SK-N-SH (cell line): ENCODE measurements at regions of chr2 and their contacts with region 1.

Region 1: DNA sequence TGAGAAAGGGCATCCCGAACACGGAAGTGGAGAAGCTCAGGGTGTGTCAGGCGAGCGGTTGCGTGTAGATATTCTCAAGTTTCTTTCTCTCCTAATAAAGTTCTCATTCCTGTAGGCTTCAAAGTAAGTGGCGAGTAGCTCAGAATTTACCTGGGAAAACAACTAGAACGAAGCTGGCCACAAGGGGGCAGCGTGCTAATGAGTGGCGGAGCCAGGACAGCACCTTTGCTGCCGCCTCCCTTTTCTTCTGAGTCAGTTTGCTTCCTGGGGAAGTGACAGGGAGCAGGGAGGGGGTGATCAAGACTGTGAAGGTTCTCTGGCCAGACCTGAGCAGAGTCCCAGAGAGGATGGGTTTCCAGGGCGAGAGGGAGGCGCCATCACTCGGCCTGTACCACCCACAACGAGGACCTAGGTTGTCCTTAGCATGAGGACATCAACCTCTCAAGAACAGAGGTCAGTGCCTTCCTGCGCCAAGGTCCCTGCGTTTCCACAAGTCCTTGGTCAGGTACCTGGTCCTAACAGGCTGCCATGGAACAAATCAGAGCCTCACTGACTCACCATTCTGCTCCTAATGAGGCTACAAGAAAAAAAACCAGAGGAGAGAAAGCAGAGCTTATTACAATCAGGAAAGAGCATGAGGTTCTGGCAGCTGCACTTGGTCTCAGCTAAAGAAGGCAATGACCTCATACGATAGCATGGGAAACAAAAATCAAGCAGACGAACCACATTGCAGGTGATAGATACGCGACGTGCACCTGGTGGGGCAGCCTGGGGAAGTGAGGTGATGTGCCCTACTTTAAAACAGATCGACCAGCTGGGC is 98.6 kb downstream of the PLB1 start:
- DNase-seq: peak; percentile 85
- H3K4me3 ChIP-seq: no peak overlapping the region; a peak in 1 of 4 replicates
- H3K27ac ChIP-seq: peak overlapping the region in 1 of 2 experiments; percentile 33; a peak in 2 of 4 replicates
- H3K4me1 ChIP-seq: peaks cover 4 to 8% of the 10 kb centered on the region in 2 experiments; a peak in 2 of 4 replicates
- H3K27me3 ChIP-seq: no peaks in the 10 kb centered on the region
- CTCF ChIP-seq: peak; percentile 97
- EP300 ChIP-seq: no peak
- RAD21 ChIP-seq: peak; percentile 91

Region 2: DNA sequence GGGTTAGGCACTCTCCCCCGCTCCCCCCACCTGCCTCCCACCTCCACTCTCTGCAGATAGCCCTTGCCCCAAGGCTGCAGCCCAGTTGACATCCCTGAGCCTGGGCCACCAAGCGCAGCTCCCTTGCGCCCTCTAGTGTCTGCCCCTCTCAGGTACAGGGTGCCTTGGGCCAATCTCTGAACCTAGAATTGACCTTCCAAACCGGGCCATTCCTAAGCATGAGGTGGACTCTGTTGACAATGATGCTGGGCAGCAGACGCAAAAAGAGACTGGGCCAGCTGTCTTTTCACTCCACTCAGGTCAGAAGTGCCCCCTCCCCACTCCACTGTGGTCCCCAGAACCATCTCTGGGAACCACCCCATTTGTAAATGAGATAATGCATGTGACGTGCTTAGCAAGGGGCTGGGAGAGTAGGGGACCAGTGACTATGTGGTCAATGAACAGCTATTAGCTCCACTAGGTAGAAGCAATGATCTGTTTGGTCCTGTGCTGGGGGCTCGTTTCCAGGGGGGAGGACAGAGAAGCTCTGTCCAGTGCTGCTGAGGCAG is 141.9 kb before region 1 on chr2:
- CTCF ChIA-PET with region 1: no interaction called
- POLR2A ChIA-PET with region 1: no interaction called
- DNase-seq: peak; percentile 83
- H3K4me3 ChIP-seq: no peak overlapping the region; a peak in 1 of 4 replicates
- H3K27ac ChIP-seq: no peak overlapping the region
- H3K4me1 ChIP-seq: peaks cover 3 to 24% of the 10 kb centered on the region in 2 experiments; a peak in 2 of 4 replicates
- H3K27me3 ChIP-seq: no peaks in the 10 kb centered on the region
- CTCF ChIP-seq: peak; percentile 96
- EP300 ChIP-seq: no peak
- RAD21 ChIP-seq: peak; percentile 87

Region 3: GRCh38 chr2:28583899-28584553 is 10.5 kb before region 1 on chr2:
- CTCF ChIA-PET with region 1: interaction called, 90 read pairs
- POLR2A ChIA-PET with region 1: interaction called, 3 read pairs
- DNase-seq: no peak
- H3K4me3 ChIP-seq: peak overlapping the region in 1 of 2 experiments; percentile 21; a peak in 2 of 4 replicates
- H3K27ac ChIP-seq: peak overlapping the region in 1 of 2 experiments; percentile 97; a peak in 2 of 4 replicates
- H3K4me1 ChIP-seq: peaks cover 0 to 19% of the 10 kb centered on the region in 2 experiments; a peak in 3 of 4 replicates
- H3K27me3 ChIP-seq: no peaks in the 10 kb centered on the region
- CTCF ChIP-seq: no peak
- EP300 ChIP-seq: peak in 1 of 2 experiments; percentile 91; a peak in 2 of 4 replicates
- RAD21 ChIP-seq: no peak

Region 4: GRCh38 chr2:28621172-28622100 is 26.9 kb after region 1 on chr2:
- CTCF ChIA-PET with region 1: interaction called, 36 read pairs
- POLR2A ChIA-PET with region 1: no interaction called
- DNase-seq: peak; percentile 47
- H3K4me3 ChIP-seq: no peak overlapping the region
- H3K27ac ChIP-seq: peak overlapping the region in 1 of 2 experiments; percentile 73; a peak in 2 of 4 replicates
- H3K4me1 ChIP-seq: peaks cover 0 to 2% of the 10 kb centered on the region in 2 experiments; a peak in 3 of 4 replicates
- H3K27me3 ChIP-seq: no peaks in the 10 kb centered on the region
- CTCF ChIP-seq: peak; percentile 47
- EP300 ChIP-seq: no peak
- RAD21 ChIP-seq: peak; percentile 34

Region 5: DNA sequence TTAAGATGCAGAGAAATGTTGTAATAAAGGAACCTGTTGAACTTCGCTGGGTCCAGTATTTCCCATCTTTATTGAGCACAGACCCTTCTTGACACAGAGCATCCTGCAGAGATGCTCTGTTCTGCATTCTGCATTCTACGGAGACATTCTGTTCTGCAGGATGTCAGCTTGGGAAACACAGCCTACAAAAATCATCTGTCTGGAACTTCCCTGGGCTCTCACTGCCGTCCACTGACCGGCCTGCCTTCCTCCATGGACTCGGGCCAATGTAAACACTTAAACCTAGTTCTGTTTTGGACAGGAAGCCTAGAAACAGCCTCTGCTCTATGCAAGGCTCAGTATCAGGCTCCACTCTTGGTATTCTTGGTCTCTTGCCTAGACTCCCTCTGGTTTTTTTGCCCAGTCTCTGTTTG is 67.1 kb after region 1 on chr2:
- CTCF ChIA-PET with region 1: interaction called, 69 read pairs
- POLR2A ChIA-PET with region 1: interaction called, 21 read pairs
- DNase-seq: peak; percentile 63
- H3K4me3 ChIP-seq: no peak overlapping the region
- H3K27ac ChIP-seq: peak overlapping the region; percentile 68 to 98
- H3K4me1 ChIP-seq: peaks cover 43 to 50% of the 10 kb centered on the region in 2 experiments
- H3K27me3 ChIP-seq: no peaks in the 10 kb centered on the region
- CTCF ChIP-seq: no peak
- EP300 ChIP-seq: peak in 1 of 2 experiments; percentile 61; a peak in 2 of 4 replicates
- RAD21 ChIP-seq: peak; percentile 41

Region 6: GRCh38 chr2:28751252-28751955 is 156.9 kb after region 1 on chr2 and contains the start of gene PPP1CB:
- CTCF ChIA-PET with region 1: interaction called, 109 read pairs
- POLR2A ChIA-PET with region 1: interaction called, 18 read pairs
- DNase-seq: peak; percentile 99
- H3K4me3 ChIP-seq: peak within 1 kb of the TSS; percentile 75 to 98
- H3K27ac ChIP-seq: peak within 1 kb of the TSS; percentile 91 to 100
- H3K4me1 ChIP-seq: peaks cover 15 to 22% of the 10 kb centered on the region in 2 experiments; a peak in 3 of 4 replicates
- H3K27me3 ChIP-seq: no peaks in the 10 kb centered on the region
- CTCF ChIP-seq: 0 out of 2 replicates have a peak, but pooled peaks have one; percentile 22
- EP300 ChIP-seq: no peak; a peak in 1 of 4 replicates
- RAD21 ChIP-seq: peak; percentile 31
- polyA plus RNA-seq, gene PPP1CB: 21.7 and 24.7 TPM in 2 replicates

Region 7: GRCh38 chr2:28776471-28776870 is 182.0 kb after region 1 on chr2:
- CTCF ChIA-PET with region 1: interaction called, 21 read pairs
- POLR2A ChIA-PET with region 1: no interaction called
- DNase-seq: no peak
- H3K4me3 ChIP-seq: no peak overlapping the region
- H3K27ac ChIP-seq: no peak overlapping the region
- H3K4me1 ChIP-seq: no peaks in the 10 kb centered on the region
- H3K27me3 ChIP-seq: no peaks in the 10 kb centered on the region
- CTCF ChIP-seq: no peak
- EP300 ChIP-seq: no peak
- RAD21 ChIP-seq: no peak

Region 8: GRCh38 chr2:28821295-28821958 is 226.9 kb after region 1 on chr2:
- CTCF ChIA-PET with region 1: interaction called, 20 read pairs
- POLR2A ChIA-PET with region 1: no interaction called
- DNase-seq: peak; percentile 57
- H3K4me3 ChIP-seq: no peak overlapping the region
- H3K27ac ChIP-seq: no peak overlapping the region
- H3K4me1 ChIP-seq: no peaks in the 10 kb centered on the region
- H3K27me3 ChIP-seq: no peaks in the 10 kb centered on the region
- CTCF ChIP-seq: peak; percentile 87
- EP300 ChIP-seq: no peak
- RAD21 ChIP-seq: peak; percentile 84